Common myeloid progenitor, CD34-positive (primary cell): ENCODE measurements at regions of chr16 and their contacts with region 1.

Region 1: DNA sequence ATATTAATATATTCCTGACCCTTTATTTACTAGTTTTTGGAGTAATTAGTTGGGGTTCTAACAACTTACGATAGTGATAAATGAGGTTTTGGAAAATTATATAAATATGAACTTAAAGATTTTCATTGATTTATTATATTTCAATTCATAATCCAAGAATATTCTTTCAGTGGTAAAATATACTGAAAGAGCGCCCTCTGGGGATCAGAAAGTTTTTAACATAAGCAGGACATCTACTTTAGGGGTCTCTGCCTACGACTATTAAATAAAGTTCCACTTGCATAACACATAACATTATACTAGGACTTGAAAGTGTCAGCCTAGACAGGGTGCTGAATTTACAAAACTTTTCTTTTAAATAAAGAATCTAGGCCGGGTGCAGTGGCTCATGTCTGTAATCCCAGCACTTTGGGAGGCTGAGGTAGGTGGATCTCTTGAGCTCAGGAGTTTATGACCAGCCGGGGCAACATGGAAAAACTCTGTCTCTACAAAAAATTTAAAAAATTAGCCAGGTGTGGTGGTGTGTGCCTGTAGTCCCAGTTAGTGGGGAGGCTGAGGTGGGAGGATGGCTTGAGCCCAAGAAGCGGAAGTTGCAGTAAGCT is 15.6 kb downstream of the RFWD3 start:
- DNase-seq: peak; percentile 19 to 47 (median 38)
- H3K4me3 ChIP-seq: no peak overlapping the region
- H3K27ac ChIP-seq: no peak overlapping the region
- H3K4me1 ChIP-seq: peaks cover 0 to 11% (median 4%) of the 10 kb centered on the region in 4 experiments
- H3K27me3 ChIP-seq: no peaks in the 10 kb centered on the region

Region 2: GRCh38 chr16:74633686-74634085 is 17.4 kb before region 1 on chr16:
- CTCF ChIA-PET with region 1: interaction called, 12 read pairs
- POLR2A ChIA-PET with region 1: interaction called, 4 read pairs
- DNase-seq: no peak
- H3K4me3 ChIP-seq: no peak overlapping the region
- H3K27ac ChIP-seq: no peak overlapping the region
- H3K4me1 ChIP-seq: no peaks in the 10 kb centered on the region
- H3K27me3 ChIP-seq: no peaks in the 10 kb centered on the region

Region 3: DNA sequence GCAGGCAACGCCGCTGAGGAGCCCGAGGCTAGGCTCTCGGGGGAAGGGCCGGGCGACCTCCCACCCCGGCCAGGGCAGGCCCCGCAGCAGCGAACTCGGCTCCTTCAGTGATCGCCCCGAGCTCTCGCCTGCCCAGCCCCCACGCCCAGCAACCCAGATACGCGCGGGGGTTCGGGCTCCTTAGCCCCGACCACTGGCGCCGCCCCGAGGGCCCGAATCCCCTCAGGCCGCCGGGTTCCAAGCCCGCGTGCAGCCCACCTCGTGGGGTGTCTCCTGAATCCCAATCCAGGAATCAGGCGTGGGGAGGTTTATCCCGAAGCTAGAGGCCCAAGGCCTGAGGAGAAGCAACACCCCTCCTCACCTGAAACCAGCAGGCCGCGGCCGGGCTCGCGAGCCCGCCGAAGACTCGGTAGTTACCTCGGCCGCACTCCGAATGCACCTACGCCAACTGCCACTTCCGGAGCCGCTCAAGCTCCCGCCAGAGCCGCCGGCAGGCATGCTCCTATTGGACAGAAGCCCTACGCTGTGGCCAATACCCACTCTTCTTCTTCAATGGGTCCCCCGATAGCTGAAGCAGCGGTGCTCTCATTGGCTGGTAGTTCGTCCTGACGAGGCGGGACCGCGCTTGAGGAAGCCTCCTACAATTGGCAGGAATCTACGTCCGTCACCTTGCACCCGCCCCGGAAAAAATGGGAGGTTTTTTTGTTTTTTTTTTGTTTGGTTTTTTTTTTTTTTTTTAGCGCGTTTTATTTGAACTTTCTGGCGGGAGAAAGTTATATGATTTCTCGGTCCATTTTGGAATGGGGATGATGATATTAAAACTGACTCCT is 15.6 kb after region 1 on chr16 and contains the start of gene RFWD3:
- CTCF ChIA-PET with region 1: interaction called, 20 read pairs
- POLR2A ChIA-PET with region 1: interaction called, 3 read pairs
- DNase-seq: peak; percentile 99 to 100 (median 100)
- H3K4me3 ChIP-seq: peak within 1 kb of the TSS; percentile 91 to 97 (median 92)
- H3K27ac ChIP-seq: peak within 1 kb of the TSS; percentile 93 to 97
- H3K4me1 ChIP-seq: peaks cover 8 to 20% (median 13%) of the 10 kb centered on the region in 4 experiments
- H3K27me3 ChIP-seq: no peaks in the 10 kb centered on the region